ENCODE measurements at regions of chr17 and their contacts with region 1.

Region 1: GRCh38 chr17:82489117-82489516 is 30.4 kb upstream of the FOXK2 start:
- DNase-seq: no peak
- H3K4me3 ChIP-seq: no peak overlapping the region
- H3K27ac ChIP-seq: peak overlapping the region in 1 of 2 donors; percentile 19
- H3K4me1 ChIP-seq: no peaks in the 10 kb centered on the region
- H3K27me3 ChIP-seq: no peaks in the 10 kb centered on the region
- CTCF ChIP-seq: no peak
- POLR2A ChIP-seq: no peak

Region 2: DNA sequence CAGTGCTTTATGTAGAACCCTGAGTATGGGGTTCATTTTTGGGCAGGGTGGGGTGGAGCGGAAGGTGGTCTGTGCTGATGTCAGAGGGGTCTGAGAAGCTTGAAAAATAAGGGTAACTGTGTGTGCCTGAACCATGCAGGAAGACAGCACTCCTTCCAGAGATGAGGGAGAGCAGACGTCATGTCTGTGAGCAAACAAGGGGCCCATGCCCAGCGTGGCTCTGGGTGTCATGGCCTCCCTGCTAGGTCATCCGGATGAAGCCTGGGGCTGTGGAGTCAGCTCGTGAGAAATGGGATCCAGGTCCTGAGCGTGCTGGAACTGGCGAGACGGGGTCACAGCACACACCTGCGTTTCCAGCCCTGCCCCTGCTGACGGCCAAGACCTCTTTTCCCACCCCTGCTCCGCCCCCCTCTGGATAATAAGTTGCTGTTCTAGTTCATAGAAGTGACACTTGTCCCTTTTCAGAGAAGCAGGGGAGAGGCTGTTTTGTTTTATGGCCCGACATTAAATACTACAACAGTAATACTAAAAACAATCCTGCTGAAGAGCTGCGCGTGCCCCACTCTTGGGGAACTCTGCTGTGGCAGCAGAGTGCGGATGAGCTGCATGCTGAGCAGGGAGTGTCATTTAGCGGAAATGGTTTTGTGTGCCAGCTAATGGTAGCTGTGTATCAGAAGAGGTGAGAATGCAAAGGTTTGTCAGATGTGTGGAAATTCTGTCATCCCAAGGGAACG is 1851.9 kb before region 1 on chr17:
- intact Hi-C with region 1: loop called (anchors 10 kb)
- DNase-seq: no peak
- H3K4me3 ChIP-seq: no peak overlapping the region
- H3K27ac ChIP-seq: no peak overlapping the region
- H3K4me1 ChIP-seq: no peaks in the 10 kb centered on the region
- H3K27me3 ChIP-seq: no peaks in the 10 kb centered on the region
- CTCF ChIP-seq: no peak
- POLR2A ChIP-seq: no peak

Region 3: DNA sequence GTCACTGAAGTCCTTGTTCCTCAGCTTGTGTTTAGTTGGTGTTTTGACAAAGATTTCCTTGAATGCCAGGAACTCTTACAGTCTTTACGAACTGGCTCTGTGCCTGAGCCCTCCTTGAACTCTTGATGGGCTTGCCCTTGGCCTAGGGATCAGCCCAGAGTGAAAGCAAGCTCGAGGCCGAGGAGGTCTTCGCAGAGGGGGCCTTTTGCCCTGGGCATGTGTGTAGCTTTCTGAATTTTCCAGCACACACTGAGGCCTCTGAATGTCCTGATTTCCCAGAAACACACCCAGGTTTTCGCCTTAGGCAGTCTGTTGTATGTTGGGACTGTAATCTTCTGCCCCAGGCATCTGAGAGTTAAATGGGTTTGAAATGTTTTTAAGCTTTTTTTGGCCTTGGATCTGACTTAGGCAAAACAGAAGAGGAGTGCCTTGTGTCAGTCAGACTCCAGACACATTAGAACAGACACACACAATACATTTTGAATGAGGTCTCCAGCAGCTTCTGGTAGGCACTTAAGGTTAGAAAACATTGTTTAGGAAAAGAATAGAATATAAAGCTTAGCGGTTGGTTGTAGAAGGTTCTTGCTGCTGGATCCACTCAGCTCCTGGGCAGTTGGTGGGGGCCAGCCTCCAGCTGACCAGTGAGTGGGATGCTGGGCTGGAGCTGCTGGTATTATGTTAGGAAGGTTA is 47.5 kb after region 1 on chr17:
- intact Hi-C with region 1: loop called (anchors 2 kb)
- DNase-seq: no peak
- H3K4me3 ChIP-seq: peak overlapping the region in 2 of 3 donors; percentile 8 to 43
- H3K27ac ChIP-seq: peak overlapping the region; percentile 92 to 94
- H3K4me1 ChIP-seq: peaks cover 5 to 12% of the 10 kb centered on the region in 2 donors
- H3K27me3 ChIP-seq: no peaks in the 10 kb centered on the region
- CTCF ChIP-seq: no peak
- POLR2A ChIP-seq: no peak

Measured in breast epithelium (tissue), 4 donors.